Dendritic cell treated with granulocyte-macrophage colony-stimulating factor and Interleukin-4, amounts not matched to agents 40 ng/mL and 50 ng/mL, for 4 days (primary cell): ENCODE measurements at regions of chr10 and their contacts with region 1.

Region 1: DNA sequence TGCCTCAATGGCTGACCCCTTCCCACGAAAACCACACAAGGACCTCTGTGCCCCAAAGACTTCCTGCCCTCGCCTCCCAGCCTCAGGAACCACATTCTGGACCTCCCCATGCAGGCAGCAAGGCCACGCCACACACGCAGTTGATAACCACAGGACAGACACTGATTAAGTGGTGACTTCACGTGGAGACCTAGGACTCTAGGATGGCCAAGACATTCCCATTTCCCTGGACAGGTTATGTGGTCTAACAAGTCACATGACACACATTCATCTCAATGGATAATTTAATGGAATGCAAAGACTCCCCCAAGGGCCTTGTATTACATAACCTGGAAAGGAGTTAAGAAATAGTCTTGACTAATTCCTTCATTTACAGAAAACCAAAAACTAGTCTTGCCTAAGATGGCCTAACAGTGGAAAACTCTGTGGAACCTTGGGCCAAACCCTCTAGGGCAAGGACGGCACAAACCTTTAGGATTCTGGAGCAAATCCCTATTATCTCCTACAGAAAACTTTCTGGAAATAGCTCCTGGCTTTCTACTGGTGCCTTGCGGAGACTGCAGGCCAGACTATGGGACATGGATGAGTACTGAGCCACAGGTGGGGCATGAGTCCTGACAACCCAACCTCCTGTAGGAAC is 110.1 kb downstream of the LARP4B start:
- H3K4me3 Mint-ChIP-seq: no peak overlapping the region
- H3K27ac Mint-ChIP-seq: peak overlapping the region; percentile 37
- H3K4me1 Mint-ChIP-seq: peaks cover 46% of the 10 kb centered on the region
- H3K27me3 Mint-ChIP-seq: no peaks in the 10 kb centered on the region

Region 2: GRCh38 chr10:753530-753929 is 67.9 kb before region 1 on chr10:
- intact Hi-C with region 1: no loop called
- H3K4me3 Mint-ChIP-seq: no peak overlapping the region
- H3K27ac Mint-ChIP-seq: no peak overlapping the region
- H3K4me1 Mint-ChIP-seq: peaks cover 5% of the 10 kb centered on the region
- H3K27me3 Mint-ChIP-seq: peaks cover 36% of the 10 kb centered on the region

Region 3: DNA sequence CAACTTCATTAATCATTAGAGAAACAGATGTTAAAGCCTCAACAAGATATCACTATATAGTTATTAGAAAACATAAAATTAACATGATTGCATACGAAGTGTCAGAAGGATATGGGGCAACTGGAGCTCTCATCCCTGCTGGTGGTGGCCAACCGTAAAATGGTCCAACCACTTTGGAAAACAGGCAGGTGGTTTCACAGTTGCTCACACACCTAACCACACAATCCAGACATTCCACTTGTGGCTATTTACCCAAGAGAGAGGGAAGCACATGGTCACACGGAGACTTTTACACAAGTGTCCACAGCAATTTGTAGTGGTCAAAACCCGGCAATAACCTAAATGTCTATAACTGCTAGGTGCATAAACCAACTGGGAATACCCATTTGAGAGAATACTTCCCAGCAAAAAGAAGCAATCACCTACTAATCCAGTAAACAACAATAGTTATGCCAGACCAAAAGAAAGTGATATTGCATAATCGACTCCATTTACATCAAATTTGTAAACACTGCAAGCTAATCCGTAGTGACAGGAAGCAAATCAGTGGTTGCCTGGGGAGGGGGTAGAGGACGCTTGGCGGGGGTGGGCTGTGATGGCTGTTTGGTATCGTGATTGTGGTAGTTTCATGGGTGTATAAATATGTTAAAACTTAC is 18.2 kb after region 1 on chr10:
- intact Hi-C with region 1: loop called (anchors 2 kb)
- H3K4me3 Mint-ChIP-seq: no peak overlapping the region
- H3K27ac Mint-ChIP-seq: no peak overlapping the region
- H3K4me1 Mint-ChIP-seq: no peaks in the 10 kb centered on the region
- H3K27me3 Mint-ChIP-seq: no peaks in the 10 kb centered on the region

Region 4: DNA sequence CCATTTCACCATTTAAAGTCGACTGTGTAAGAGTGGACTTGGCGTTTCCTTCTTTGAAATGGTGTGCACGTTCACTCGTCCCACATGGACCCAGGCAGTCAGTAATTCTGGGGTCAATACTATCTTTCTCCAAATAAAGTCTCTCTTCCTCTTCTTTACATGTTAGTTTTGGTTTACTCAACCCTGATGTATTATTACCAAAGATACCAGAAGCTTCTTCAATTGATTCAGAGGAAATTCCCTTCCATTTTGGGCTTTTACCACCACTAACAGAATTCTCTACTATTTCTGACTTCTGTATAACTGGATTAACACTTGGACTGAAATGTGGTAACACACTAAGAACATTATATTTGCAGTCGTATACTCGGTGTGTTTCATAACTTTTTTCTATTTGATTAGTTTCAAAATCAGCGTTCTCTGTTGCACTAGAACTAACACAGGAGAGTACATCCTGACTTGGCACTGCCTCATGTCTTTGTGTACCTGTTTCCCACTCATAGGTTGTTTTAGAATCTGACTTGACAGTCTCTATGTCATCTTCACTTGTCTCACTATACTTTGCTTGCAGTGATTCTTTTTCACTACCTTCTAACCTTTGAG is 49.2 kb after region 1 on chr10:
- intact Hi-C with region 1: no loop called
- H3K4me3 Mint-ChIP-seq: no peak overlapping the region
- H3K27ac Mint-ChIP-seq: peak overlapping the region; percentile 38
- H3K4me1 Mint-ChIP-seq: peaks cover 20% of the 10 kb centered on the region
- H3K27me3 Mint-ChIP-seq: no peaks in the 10 kb centered on the region